Gastrocnemius medialis (tissue), 4 donors: ENCODE measurements at regions of chr17 and their contacts with region 1.

Region 1: DNA sequence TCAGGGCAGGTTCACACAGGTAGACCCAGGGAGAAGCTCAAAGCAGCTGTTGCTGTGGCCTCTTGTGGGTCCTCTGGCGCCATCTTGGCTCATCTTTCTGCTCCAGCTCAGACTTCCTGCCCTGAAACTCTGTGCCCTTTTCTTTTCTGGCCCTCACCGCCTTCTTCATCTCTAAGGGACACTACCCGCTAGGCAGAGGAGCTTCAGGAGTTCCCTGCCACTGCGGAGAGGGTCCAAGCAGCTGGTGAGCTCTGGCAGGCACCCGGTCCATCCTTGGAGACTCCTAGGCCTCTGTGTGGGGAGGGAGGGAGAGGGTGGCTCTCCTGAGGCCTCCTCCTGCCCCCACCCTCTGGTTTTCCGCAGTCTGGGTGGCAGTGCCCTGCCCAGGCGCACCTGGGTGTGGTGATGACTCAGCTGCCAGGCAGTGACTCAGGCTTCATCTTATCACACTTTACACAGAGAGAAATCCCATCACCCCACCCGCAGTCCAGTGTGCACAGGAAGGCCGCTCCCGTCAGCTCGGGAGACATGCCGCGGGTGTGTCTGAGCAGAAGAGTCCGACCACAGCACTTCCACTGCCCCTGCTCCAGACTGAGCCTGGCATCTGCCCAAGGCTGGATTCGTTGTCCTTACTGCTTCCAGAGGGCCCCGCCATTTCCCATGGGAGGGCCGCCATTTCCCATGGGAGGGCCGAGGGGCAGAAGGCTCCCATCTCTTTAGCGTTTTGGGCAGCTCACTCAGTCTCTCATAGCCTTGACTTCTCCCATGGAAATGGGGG is 7.3 kb downstream of the NT5C start:
- DNase-seq: peak in 1 of 2 donors; percentile 43
- ATAC-seq: no peak
- H3K4me3 ChIP-seq: no peak overlapping the region
- H3K27ac ChIP-seq: peak overlapping the region in 1 of 4 donors; percentile 34
- H3K4me1 ChIP-seq: peaks cover 0 to 4% of the 10 kb centered on the region in 2 donors
- H3K27me3 ChIP-seq: no peaks in the 10 kb centered on the region
- CTCF ChIP-seq: no peak
- POLR2A ChIP-seq: no peak

Region 2: DNA sequence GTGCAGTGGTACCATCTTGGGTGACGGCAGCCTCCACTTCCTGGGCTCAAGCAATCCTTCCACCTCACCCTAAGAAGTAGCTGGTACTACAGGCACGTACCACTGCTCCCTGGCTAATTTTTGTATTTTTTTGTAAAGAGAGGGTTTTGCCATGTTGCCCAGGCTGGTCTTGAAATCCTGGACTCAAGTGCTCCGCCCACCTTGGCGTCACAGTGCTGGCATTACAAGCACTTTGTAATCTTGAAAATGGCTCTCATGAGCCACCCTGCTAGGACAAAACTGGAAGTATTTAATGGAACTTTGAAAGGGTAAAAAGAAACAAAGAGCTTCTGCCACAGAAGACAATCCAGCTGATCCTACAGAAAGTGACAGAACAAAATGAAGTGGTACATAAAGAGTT is 49.3 kb after region 1 on chr17:
- in situ Hi-C with region 1: loop called in 3 of 4 experiments (anchors 10 kb)
- intact Hi-C with region 1: no loop called
- DNase-seq: no peak
- ATAC-seq: no peak
- H3K4me3 ChIP-seq: no peak overlapping the region
- H3K27ac ChIP-seq: no peak overlapping the region
- H3K4me1 ChIP-seq: no peaks in the 10 kb centered on the region
- H3K27me3 ChIP-seq: no peaks in the 10 kb centered on the region
- CTCF ChIP-seq: no peak
- POLR2A ChIP-seq: no peak